H1 (cell line): ENCODE measurements at regions of chr9 and their contacts with region 1.

Region 1: GRCh38 chr9:35690431-35691333 is 957 bp upstream of the TPM2 start:
- DNase-seq: peak in 1 of 2 experiments; percentile 84
- H3K4me3 ChIP-seq: peak overlapping the region; percentile 72 to 99 (median 82)
- H3K27ac ChIP-seq: no peak overlapping the region
- H3K4me1 ChIP-seq: peaks cover 6 to 15% (median 8%) of the 10 kb centered on the region in 4 experiments; a peak in 6 of 7 replicates
- H3K27me3 ChIP-seq: no peaks in the 10 kb centered on the region
- CTCF ChIP-seq: no peak
- EP300 ChIP-seq: no peak
- POLR2A ChIP-seq: no peak
- RAD21 ChIP-seq: no peak

Region 2: GRCh38 chr9:35664531-35665470 is 25.9 kb before region 1 on chr9 and contains the start of gene ARHGEF39:
- CTCF ChIA-PET with region 1: interaction called, 347 read pairs
- POLR2A ChIA-PET with region 1: interaction called, 84 read pairs
- DNase-seq: peak; percentile 81 to 92
- H3K4me3 ChIP-seq: peak within 1 kb of the TSS; percentile 50 to 84 (median 78)
- H3K27ac ChIP-seq: 0 out of 2 replicates have a peak within 1 kb of the TSS, but pooled peaks have one; percentile 56
- H3K4me1 ChIP-seq: peaks cover 0 to 5% (median 1%) of the 10 kb centered on the region in 4 experiments; a peak in 5 of 7 replicates
- H3K27me3 ChIP-seq: no peaks in the 10 kb centered on the region
- CTCF ChIP-seq: peak; percentile 58 to 65 (median 60); a peak in 3 of 4 replicates
- EP300 ChIP-seq: no peak
- POLR2A ChIP-seq: peak in 1 of 2 experiments; percentile 75; a peak in 2 of 3 replicates
- RAD21 ChIP-seq: peak; percentile 41 to 44
- total RNA-seq, gene ARHGEF39: 17.5 and 18.6 TPM in 2 replicates

Region 3: DNA sequence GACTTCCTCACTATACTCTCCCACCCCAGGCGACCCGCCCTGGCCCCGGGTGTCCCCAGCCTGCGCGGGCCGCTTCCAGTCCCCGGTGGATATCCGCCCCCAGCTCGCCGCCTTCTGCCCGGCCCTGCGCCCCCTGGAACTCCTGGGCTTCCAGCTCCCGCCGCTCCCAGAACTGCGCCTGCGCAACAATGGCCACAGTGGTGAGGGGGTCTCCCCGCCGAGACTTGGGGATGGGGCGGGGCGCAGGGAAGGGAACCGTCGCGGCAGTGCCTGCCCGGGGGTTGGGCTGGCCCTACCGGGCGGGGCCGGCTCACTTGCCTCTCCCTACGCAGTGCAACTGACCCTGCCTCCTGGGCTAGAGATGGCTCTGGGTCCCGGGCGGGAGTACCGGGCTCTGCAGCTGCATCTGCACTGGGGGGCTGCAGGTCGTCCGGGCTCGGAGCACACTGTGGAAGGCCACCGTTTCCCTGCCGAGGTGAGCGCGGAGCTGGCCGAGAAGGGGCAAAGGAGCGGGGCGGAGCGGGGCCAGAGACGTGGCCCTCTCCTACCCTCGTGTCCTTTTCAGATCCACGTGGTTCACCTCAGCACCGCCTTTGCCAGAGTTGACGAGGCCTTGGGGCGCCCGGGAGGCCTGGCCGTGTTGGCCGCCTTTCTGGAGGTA is 14.8 kb before region 1 on chr9:
- CTCF ChIA-PET with region 1: interaction called, 77 read pairs
- POLR2A ChIA-PET with region 1: interaction called, 63 read pairs
- DNase-seq: peak in 1 of 2 experiments; percentile 98
- H3K4me3 ChIP-seq: peak overlapping the region; percentile 55 to 69 (median 60)
- H3K27ac ChIP-seq: no peak overlapping the region
- H3K4me1 ChIP-seq: peaks cover 0 to 15% (median 3%) of the 10 kb centered on the region in 4 experiments; a peak in 5 of 7 replicates
- H3K27me3 ChIP-seq: peaks cover 0 to 3% (median 3%) of the 10 kb centered on the region in 4 experiments; a peak in 4 of 7 replicates
- CTCF ChIP-seq: no peak
- EP300 ChIP-seq: no peak
- POLR2A ChIP-seq: peak; percentile 43 to 55; a peak in 2 of 3 replicates
- RAD21 ChIP-seq: no peak

Region 4: DNA sequence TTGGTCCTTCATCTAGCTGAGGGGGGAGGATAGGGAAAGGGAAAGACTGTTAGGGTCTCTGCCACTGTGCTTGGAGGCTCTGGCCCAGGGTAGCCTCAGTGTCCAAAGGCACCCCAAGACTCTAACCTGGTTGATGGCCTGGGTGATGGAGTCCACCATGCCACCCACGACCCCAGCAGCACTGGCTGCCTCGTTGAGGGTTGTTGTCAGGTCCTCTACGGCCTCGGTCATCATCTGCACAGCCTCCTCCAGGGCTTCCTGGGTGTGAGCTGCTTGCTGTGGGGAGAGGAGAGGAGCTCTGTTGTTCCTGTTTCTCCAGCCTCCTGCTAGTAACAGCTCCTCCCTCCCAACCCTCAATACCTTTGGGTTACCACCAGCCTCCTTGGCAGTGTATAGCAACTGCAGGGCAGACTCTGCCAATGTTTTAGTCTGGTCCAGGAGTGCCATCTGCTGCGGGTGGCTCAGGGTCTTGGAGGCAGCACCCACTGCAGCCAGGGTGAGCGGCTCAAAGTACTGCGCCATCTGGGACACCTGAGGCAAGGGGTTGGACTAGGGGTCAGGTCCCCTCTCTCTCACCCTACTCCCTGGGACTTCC is 15.3 kb after region 1 on chr9:
- CTCF ChIA-PET with region 1: interaction called, 199 read pairs
- POLR2A ChIA-PET with region 1: interaction called, 19 read pairs
- DNase-seq: no peak
- H3K4me3 ChIP-seq: no peak overlapping the region
- H3K27ac ChIP-seq: no peak overlapping the region
- H3K4me1 ChIP-seq: no peaks in the 10 kb centered on the region
- H3K27me3 ChIP-seq: no peaks in the 10 kb centered on the region
- CTCF ChIP-seq: no peak
- EP300 ChIP-seq: no peak
- POLR2A ChIP-seq: no peak
- RAD21 ChIP-seq: no peak

Region 5: DNA sequence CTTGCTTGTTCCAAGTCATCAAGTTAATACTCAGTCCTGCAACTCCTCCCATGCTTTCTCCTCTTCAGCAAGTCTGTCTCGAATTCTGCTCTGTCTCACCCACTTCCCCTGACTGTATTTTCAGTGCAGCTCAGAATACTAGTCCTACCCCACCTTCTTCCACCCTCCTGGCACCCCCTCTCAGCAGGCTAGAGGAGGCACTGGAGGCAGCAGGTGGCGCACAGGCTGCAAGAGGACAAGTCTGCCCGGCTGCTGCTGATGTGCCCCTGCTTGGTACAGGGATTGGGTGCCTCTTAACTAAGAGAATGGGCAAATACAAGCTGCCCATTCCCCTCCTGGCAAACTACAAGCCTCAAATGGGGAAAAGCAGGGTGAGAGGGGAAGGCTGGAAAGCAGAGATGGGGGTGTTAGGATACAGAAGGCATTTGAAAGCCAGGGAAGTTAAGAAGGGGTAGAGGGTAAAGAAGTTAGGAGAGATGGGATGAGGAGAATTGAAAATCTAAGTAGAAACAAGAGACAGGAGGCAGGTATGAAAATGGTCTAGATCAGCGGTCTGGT is 36.3 kb after region 1 on chr9:
- CTCF ChIA-PET with region 1: interaction called, 95 read pairs
- POLR2A ChIA-PET with region 1: interaction called, 158 read pairs
- DNase-seq: no peak
- H3K4me3 ChIP-seq: no peak overlapping the region
- H3K27ac ChIP-seq: 0 out of 2 replicates have a peak overlapping the region, but pooled peaks have one; percentile 33
- H3K4me1 ChIP-seq: peaks cover 21 to 42% (median 30%) of the 10 kb centered on the region in 4 experiments
- H3K27me3 ChIP-seq: no peaks in the 10 kb centered on the region
- CTCF ChIP-seq: peak in 1 of 3 experiments; percentile 2; a peak in 1 of 4 replicates
- EP300 ChIP-seq: no peak
- POLR2A ChIP-seq: no peak
- RAD21 ChIP-seq: no peak

Region 6: GRCh38 chr9:35748858-35749514 is 58.3 kb after region 1 on chr9 and contains the starts of genes GBA2 and RGP1:
- CTCF ChIA-PET with region 1: no interaction called
- POLR2A ChIA-PET with region 1: interaction called, 12 read pairs
- DNase-seq: peak in 1 of 2 experiments; percentile 88
- H3K4me3 ChIP-seq: peak within 1 kb of the TSS; percentile 88 to 98 (median 94)
- H3K27ac ChIP-seq: peak within 1 kb of the TSS; percentile 74; the same call in 1 of the 2 replicates
- H3K4me1 ChIP-seq: peaks cover 0 to 19% (median 5%) of the 10 kb centered on the region in 4 experiments; a peak in 5 of 7 replicates
- H3K27me3 ChIP-seq: no peaks in the 10 kb centered on the region
- CTCF ChIP-seq: no peak
- EP300 ChIP-seq: 0 out of 3 replicates have a peak, but pooled peaks of 1 of the 2 experiments have one; percentile 70
- POLR2A ChIP-seq: peak; percentile 39 to 72
- RAD21 ChIP-seq: no peak
- total RNA-seq, gene GBA2: 69.1 and 71.9 TPM in 2 replicates
- total RNA-seq, gene RGP1: 21.8 and 22.7 TPM in 2 replicates